ENCODE measurements at regions of chr1 and their contacts with region 1.

Region 1: GRCh38 chr1:1059494-1060280 is 14.4 kb downstream of the RNF223 start:
- DNase-seq: peak; percentile 96
- ATAC-seq: peak; percentile 55
- H3K4me3 Mint-ChIP-seq: peak overlapping the region; percentile 87
- H3K27ac Mint-ChIP-seq: no peak overlapping the region
- H3K4me1 Mint-ChIP-seq: peaks cover 31% of the 10 kb centered on the region
- H3K27me3 Mint-ChIP-seq: peaks cover 24% of the 10 kb centered on the region
- CTCF ChIP-seq: no peak

Region 2: DNA sequence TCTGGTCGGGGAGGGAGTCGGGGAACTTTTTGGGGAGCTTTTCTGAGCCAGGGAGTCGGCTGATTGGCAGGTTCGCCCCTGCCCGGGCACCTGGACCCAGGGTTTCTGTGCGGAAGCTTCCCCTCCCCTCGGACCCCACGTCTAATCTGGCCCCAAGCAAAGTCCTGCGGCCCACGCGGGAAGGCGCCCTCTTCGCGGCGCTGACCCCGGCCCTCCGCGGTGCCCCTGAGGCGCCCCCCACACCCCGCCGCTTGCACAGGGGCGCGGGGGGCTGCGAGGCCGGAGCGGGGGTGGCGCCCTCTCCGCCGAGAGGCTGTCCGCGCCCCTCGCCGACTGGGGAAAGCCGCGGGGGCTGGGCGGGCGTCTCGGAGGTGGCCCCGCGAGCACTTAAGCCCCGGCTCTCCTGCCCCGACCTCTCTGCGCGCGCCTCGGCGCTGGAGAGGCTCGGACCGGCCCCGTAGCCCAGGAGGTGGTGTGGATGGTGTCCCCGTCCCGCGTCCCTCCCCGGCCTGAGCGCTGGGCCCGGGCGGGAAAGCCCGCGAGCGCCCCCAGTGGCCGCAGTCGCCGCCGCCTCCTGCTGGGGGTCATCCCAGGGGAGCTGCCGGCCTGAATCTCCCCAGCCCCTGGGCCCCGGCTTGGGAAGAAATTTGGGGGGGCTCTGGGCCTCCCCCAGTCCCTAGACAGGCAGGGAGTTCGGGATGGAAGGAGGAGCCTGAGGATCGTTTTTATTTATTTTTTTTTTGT is 58.1 kb before region 1 on chr1:
- CTCF ChIA-PET with region 1: interaction called, 14 read pairs
- POLR2A ChIA-PET with region 1: interaction called, 6 read pairs
- intact Hi-C with region 1: no loop called
- DNase-seq: peak; percentile 76
- ATAC-seq: peak; percentile 57
- H3K4me3 Mint-ChIP-seq: peak overlapping the region; percentile 65
- H3K27ac Mint-ChIP-seq: no peak overlapping the region
- H3K4me1 Mint-ChIP-seq: peaks cover 15% of the 10 kb centered on the region
- H3K27me3 Mint-ChIP-seq: peaks cover 41% of the 10 kb centered on the region
- CTCF ChIP-seq: peak; percentile 97

Region 3: GRCh38 chr1:1019122-1019999 is 40.3 kb before region 1 on chr1:
- CTCF ChIA-PET with region 1: interaction called, 17 read pairs
- POLR2A ChIA-PET with region 1: interaction called, 13 read pairs
- intact Hi-C with region 1: no loop called
- DNase-seq: peak; percentile 81
- ATAC-seq: peak; percentile 79
- H3K4me3 Mint-ChIP-seq: peak overlapping the region; percentile 66
- H3K27ac Mint-ChIP-seq: no peak overlapping the region
- H3K4me1 Mint-ChIP-seq: peaks cover 19% of the 10 kb centered on the region
- H3K27me3 Mint-ChIP-seq: no peaks in the 10 kb centered on the region
- CTCF ChIP-seq: peak; percentile 48

Region 4: DNA sequence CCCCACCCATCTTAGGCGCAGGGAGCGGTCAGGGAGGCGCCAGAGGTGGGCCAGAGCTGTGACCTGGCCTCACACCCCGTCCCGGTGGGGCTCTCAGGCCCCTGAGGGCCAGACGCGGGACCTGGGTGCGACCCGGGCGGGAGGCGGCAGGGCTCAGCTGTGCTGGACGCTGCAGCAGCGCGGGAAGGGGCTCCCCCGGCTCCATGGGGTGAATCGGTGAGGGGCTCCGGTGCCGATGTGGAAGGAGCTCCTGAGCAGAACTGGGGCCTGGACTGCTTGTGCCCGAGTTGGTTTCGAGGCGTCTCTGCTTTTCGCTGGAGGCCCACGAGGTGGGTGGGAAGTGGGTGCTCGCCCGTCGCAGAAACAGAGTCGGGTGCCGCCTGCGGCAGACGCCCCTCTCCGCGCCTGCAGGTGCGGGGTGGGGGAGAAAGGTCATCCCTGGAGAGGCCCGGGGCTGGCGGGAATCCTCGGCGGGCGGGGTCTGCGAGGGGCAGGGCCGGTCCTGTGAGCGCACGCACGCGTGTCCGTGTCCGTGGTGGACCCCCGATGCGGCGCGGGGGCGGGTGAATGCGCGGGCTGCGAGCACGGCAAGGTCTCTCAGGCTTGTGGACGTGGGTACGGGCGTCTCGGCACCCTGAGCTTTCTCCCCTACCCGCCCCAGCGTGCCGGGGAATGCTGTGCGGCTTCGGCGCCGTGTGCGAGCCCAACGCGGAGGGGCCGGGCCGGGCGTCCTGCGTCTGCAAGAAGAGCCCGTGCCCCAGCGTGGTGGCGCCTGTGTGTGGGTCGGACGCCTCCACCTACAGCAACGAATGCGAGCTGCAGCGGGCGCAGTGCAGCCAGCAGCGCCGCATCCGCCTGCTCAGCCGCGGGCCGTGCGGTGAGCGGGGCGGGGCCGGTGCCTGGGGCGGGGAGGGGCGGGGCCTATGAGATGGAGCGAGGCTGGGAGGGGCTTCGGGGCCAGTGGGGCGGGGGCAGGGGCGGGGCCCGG is 19.4 kb before region 1 on chr1:
- CTCF ChIA-PET with region 1: interaction called, 21 read pairs
- POLR2A ChIA-PET with region 1: interaction called, 30 read pairs
- intact Hi-C with region 1: no loop called
- DNase-seq: peak; percentile 85
- ATAC-seq: peak; percentile 88
- H3K4me3 Mint-ChIP-seq: peak overlapping the region; percentile 57
- H3K27ac Mint-ChIP-seq: no peak overlapping the region
- H3K4me1 Mint-ChIP-seq: peaks cover 19% of the 10 kb centered on the region
- H3K27me3 Mint-ChIP-seq: peaks cover 26% of the 10 kb centered on the region
- CTCF ChIP-seq: no peak

Measured in activated CD8-positive, alpha-beta T cell treated with anti-CD3 and anti-CD28 coated beads for 36 hours (primary cell).